ENCODE measurements at regions of chr15 and their contacts with region 1.

Region 1: GRCh38 chr15:34594361-34594760 is 10.9 kb upstream of the GOLGA8B start:
- DNase-seq: no peak
- ATAC-seq: no peak
- H3K4me3 ChIP-seq: no peak overlapping the region
- H3K27ac ChIP-seq: no peak overlapping the region
- H3K4me1 ChIP-seq: no peaks in the 10 kb centered on the region
- H3K27me3 ChIP-seq: peaks cover 2% of the 10 kb centered on the region; the same call in 1 of the 2 replicates
- CTCF ChIP-seq: no peak

Region 2: GRCh38 chr15:34259566-34259965 is 334.8 kb before region 1 on chr15:
- CTCF ChIA-PET with region 1: no interaction called
- POLR2A ChIA-PET with region 1: no interaction called
- in situ Hi-C with region 1: no loop called
- intact Hi-C with region 1: no loop called
- DNase-seq: no peak
- ATAC-seq: no peak
- H3K4me3 ChIP-seq: no peak overlapping the region
- H3K27ac ChIP-seq: no peak overlapping the region
- H3K4me1 ChIP-seq: no peaks in the 10 kb centered on the region
- H3K27me3 ChIP-seq: no peaks in the 10 kb centered on the region
- CTCF ChIP-seq: no peak

Region 3: GRCh38 chr15:34514251-34514670 is 80.1 kb before region 1 on chr15:
- CTCF ChIA-PET with region 1: no interaction called
- POLR2A ChIA-PET with region 1: no interaction called
- in situ Hi-C with region 1: no loop called
- intact Hi-C with region 1: loop called (anchors 10 kb)
- DNase-seq: no peak
- ATAC-seq: peak; percentile 84
- H3K4me3 ChIP-seq: peak overlapping the region; percentile 58 to 66
- H3K27ac ChIP-seq: peak overlapping the region; percentile 30; the same call in 1 of the 2 replicates
- H3K4me1 ChIP-seq: no peaks in the 10 kb centered on the region
- H3K27me3 ChIP-seq: peaks cover 2% of the 10 kb centered on the region; the same call in 1 of the 2 replicates
- CTCF ChIP-seq: no peak

Region 4: DNA sequence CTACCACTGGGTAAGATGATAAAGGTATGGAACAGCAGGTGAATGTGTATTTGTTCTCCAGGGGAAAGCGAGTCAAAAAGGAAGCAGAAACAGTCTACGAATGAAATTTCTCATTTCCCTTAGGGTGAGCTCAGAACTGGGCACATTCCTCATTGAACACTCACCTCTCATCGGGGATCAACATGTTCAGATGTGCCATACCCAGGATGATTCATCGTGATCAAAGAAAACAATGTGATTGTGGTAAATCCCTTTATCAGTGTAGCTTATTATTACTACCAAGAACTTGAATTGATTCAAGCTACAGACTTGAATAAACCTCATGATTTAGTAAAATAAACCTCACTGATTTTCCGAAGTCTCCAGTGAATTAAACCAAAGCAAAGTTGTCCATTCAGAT is 88.3 kb after region 1 on chr15:
- CTCF ChIA-PET with region 1: no interaction called
- POLR2A ChIA-PET with region 1: no interaction called
- in situ Hi-C with region 1: no loop called
- intact Hi-C with region 1: no loop called
- DNase-seq: no peak
- ATAC-seq: no peak
- H3K4me3 ChIP-seq: no peak overlapping the region
- H3K27ac ChIP-seq: no peak overlapping the region
- H3K4me1 ChIP-seq: no peaks in the 10 kb centered on the region
- H3K27me3 ChIP-seq: peaks cover under 1% of the 10 kb centered on the region; the same call in 1 of the 2 replicates
- CTCF ChIP-seq: no peak

Region 5: DNA sequence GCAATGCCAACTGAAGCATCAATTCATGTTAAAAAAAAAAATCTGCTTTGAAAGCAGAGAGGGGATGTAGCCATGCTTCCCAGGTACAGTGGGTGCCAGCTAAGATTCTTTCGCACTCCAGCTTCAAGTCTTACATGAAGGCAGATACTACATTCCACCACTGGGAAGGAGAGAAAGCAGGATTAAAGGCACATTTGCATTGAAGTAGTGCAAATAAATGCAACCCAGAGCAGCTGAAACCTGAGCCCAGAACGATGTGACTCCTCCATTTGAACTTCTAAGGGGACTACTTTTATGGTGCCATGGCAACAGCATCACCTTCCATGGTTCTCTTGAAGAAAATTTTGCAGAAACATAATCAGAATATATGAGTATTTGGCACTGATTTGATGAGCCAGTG is 179.6 kb after region 1 on chr15:
- CTCF ChIA-PET with region 1: no interaction called
- POLR2A ChIA-PET with region 1: no interaction called
- in situ Hi-C with region 1: no loop called
- intact Hi-C with region 1: no loop called
- DNase-seq: no peak
- ATAC-seq: no peak
- H3K4me3 ChIP-seq: no peak overlapping the region
- H3K27ac ChIP-seq: no peak overlapping the region
- H3K4me1 ChIP-seq: no peaks in the 10 kb centered on the region
- H3K27me3 ChIP-seq: peaks cover 20% of the 10 kb centered on the region
- CTCF ChIP-seq: no peak

Measured in Panc1 (cell line).